ENCODE measurements at regions of chr1 and their contacts with region 1.

Region 1: DNA sequence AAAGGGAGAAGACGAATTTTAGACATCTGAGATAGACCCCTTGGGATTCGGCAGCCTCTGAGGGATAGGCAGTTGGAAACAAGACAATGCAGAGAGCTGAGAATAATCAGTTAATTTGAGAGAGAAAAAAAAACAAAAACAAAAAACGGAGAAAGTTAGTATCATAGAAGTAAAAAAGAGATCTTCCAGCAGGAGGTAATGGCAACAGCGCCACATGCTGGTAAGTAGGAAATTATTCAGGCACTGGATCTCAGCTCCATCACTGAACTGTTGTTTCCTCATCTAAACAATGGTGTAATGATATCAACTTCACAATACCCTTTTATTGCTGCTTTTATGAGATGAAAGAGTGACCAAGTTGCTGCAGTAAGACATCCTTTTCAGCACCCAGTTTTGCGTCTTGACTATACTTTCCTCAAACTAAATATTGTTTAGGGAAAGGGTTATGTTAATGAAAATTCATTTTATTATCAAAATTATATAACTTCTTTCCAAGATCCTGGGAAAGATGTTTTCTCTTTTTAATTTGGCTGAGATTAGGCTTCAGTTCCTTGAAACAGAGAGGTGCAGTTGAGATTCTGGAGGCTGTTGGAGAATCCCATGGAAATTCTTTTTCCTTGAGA is 91.4 kb upstream of the KCNA3 start:
- DNase-seq: peak; percentile 58
- H3K4me3 Mint-ChIP-seq: peak overlapping the region; percentile 40
- H3K27ac Mint-ChIP-seq: no peak overlapping the region
- H3K4me1 Mint-ChIP-seq: peaks cover 3% of the 10 kb centered on the region
- H3K27me3 Mint-ChIP-seq: peaks cover 12% of the 10 kb centered on the region

Region 2: GRCh38 chr1:110554871-110555801 is 211.0 kb before region 1 on chr1:
- CTCF ChIA-PET with region 1: interaction called, 32 read pairs
- POLR2A ChIA-PET with region 1: no interaction called
- intact Hi-C with region 1: no loop called
- DNase-seq: peak; percentile 71
- H3K4me3 Mint-ChIP-seq: no peak overlapping the region
- H3K27ac Mint-ChIP-seq: no peak overlapping the region
- H3K4me1 Mint-ChIP-seq: peaks cover 4% of the 10 kb centered on the region
- H3K27me3 Mint-ChIP-seq: peaks cover 42% of the 10 kb centered on the region

Region 3: DNA sequence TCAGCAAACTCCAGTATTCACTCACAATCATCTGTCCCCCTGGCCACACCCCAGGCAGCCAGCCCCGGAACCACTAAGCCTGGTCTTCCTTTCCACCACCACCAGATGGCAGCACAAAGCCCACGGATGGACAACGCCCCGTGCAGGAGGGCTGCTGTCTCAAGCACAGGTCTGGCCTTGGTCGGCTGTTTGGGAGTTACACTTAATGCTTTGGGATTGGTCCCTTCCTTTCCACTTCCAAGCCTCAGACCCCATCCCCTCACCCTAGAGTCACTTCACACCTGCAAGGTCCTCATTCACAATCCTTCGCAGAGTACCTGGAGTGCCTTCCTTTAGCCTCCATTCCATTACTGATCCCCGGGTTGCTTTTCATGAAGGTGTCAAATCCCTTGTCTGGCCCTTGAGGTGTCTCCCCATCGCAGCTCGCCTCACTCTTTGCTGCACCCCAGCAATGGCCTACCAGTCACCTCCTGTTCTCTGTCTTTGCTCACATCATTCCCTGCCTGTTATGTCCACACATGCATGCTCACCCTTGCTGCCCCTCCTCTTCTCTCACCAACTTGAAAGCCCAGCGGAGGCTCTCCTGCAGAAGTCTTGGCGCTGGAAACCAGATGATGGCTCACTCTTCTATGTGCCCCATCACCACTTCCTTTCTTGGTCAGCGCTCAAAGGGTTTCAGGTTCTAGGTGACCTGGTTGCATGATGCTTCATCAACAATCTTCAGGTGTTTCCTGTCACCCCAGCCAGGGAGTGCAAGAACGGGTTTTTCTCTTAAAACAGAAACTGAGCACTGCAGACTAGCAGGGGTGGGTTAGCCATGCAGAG is 135.1 kb before region 1 on chr1:
- CTCF ChIA-PET with region 1: interaction called, 43 read pairs
- POLR2A ChIA-PET with region 1: no interaction called
- intact Hi-C with region 1: loop called (anchors 1 kb)
- DNase-seq: peak; percentile 92
- H3K4me3 Mint-ChIP-seq: no peak overlapping the region
- H3K27ac Mint-ChIP-seq: no peak overlapping the region
- H3K4me1 Mint-ChIP-seq: peaks cover 66% of the 10 kb centered on the region
- H3K27me3 Mint-ChIP-seq: no peaks in the 10 kb centered on the region

Region 4: GRCh38 chr1:110663241-110663640 is 102.9 kb before region 1 on chr1:
- CTCF ChIA-PET with region 1: interaction called, 10 read pairs
- POLR2A ChIA-PET with region 1: no interaction called
- intact Hi-C with region 1: no loop called
- DNase-seq: no peak
- H3K4me3 Mint-ChIP-seq: no peak overlapping the region
- H3K27ac Mint-ChIP-seq: no peak overlapping the region
- H3K4me1 Mint-ChIP-seq: peaks cover 27% of the 10 kb centered on the region
- H3K27me3 Mint-ChIP-seq: no peaks in the 10 kb centered on the region

Region 5: DNA sequence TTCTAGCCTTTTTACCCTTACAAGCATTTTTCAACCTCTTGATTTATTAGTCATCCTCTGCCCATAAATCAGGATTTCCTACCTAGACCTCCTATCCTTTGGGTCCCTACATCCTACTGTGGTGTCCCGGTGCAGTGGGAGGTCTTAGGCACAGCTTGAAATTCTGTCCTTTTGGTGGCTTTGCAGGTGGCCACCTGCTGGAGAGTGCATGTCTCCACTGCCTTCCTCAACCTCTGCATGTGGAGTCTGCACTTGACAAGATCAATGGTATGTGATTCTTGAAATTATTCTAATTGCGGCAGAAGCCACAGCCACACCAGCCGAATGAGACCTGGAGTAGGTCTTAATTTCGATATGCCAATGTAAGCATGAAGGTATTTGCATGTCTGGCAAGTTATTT is 79.9 kb before region 1 on chr1:
- CTCF ChIA-PET with region 1: interaction called, 4 read pairs
- POLR2A ChIA-PET with region 1: no interaction called
- intact Hi-C with region 1: loop called (anchors 5 kb)
- DNase-seq: peak; percentile 31
- H3K4me3 Mint-ChIP-seq: no peak overlapping the region
- H3K27ac Mint-ChIP-seq: no peak overlapping the region
- H3K4me1 Mint-ChIP-seq: peaks cover 15% of the 10 kb centered on the region
- H3K27me3 Mint-ChIP-seq: no peaks in the 10 kb centered on the region

Region 6: GRCh38 chr1:111139324-111139955 is 373.3 kb after region 1 on chr1:
- CTCF ChIA-PET with region 1: no interaction called
- POLR2A ChIA-PET with region 1: no interaction called
- intact Hi-C with region 1: no loop called
- DNase-seq: peak; percentile 56
- H3K4me3 Mint-ChIP-seq: peak overlapping the region; percentile 92
- H3K27ac Mint-ChIP-seq: peak overlapping the region; percentile 88
- H3K4me1 Mint-ChIP-seq: peaks cover 33% of the 10 kb centered on the region
- H3K27me3 Mint-ChIP-seq: no peaks in the 10 kb centered on the region